H1 (cell line): ENCODE measurements at regions of chr4 and their contacts with region 1.

Region 1: DNA sequence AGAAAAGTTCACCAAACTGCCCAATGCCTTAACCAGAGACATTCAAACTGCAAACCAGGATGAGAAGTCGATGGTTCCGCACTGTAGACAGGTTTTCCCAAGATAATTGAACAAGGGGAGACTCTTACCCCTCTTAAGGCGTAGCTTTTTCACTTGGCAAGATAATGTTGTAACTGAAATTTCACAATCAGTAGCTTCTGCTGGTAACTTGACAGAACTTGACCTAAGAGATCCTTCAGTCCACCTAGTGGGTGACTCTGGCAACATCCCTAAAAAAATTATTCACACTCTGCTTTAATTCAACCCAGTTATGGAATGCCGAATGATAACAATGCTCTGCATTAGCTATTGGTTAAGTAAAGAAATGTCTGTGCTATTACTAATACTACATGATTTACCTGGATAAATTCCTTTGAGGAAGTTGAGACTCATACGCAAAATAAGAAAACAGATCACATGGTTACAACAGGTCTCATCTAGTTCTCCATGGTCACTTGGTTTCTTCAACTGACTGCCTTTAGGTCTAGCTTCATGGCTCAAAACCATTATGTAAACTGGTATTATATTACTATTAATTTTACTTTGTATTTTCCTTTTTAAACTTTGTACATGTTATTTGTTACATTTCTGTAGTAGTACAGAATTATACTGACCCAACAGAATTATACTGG is 9.1 kb downstream of the ELF2 start:
- DNase-seq: no peak
- H3K4me3 ChIP-seq: no peak overlapping the region
- H3K27ac ChIP-seq: no peak overlapping the region; the same call in 1 of the 2 replicates
- H3K4me1 ChIP-seq: peaks cover 1 to 11% (median 7%) of the 10 kb centered on the region in 4 experiments; a peak in 4 of 7 replicates
- H3K27me3 ChIP-seq: no peaks in the 10 kb centered on the region
- CTCF ChIP-seq: peak in 2 of 3 experiments; percentile 50 to 58; a peak in 2 of 4 replicates
- EP300 ChIP-seq: no peak
- POLR2A ChIP-seq: no peak
- RAD21 ChIP-seq: peak; percentile 71 to 78

Region 2: GRCh38 chr4:139099366-139099982 is 68.4 kb before region 1 on chr4:
- CTCF ChIA-PET with region 1: interaction called, 68 read pairs
- POLR2A ChIA-PET with region 1: interaction called, 3 read pairs
- DNase-seq: peak in 1 of 2 experiments; percentile 73
- H3K4me3 ChIP-seq: no peak overlapping the region
- H3K27ac ChIP-seq: no peak overlapping the region
- H3K4me1 ChIP-seq: no peaks in the 10 kb centered on the region
- H3K27me3 ChIP-seq: no peaks in the 10 kb centered on the region
- CTCF ChIP-seq: peak; percentile 25 to 91 (median 84)
- EP300 ChIP-seq: no peak
- POLR2A ChIP-seq: no peak
- RAD21 ChIP-seq: peak; percentile 97 to 99

Region 3: DNA sequence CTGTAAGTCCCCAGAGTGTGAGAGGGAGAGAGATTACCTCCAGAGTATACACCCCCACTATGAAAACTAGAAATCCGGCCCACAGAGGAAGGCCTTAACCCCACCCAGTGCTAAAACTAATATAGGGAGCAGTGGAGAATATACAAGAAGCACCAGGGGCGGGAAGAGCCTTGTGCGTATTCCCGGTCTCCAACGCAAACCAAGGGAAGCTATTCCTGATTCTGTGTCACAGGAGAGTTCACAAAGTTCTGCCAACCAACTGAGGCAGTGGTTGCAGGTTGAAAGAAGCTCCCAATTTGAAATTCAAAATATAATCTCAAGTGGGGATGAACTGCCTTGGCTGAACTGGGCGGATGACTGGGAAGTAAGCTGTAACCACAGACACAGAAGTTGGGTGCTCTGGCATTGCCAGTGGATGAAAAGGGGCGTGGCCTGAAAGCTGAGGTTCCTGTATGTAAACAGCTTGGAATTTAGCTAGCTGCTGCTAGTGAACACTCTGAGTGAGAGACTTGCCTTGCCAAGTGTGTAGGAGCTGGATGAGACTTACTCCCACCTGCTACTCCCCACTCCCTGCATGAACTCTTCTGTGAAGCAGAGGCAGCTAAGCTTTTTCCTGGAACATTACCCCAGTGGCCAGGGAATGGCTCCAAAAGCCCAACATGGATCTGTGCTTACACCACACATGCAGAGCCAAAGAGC is 23.6 kb before region 1 on chr4:
- CTCF ChIA-PET with region 1: interaction called, 12 read pairs
- POLR2A ChIA-PET with region 1: interaction called, 3 read pairs
- DNase-seq: no peak
- H3K4me3 ChIP-seq: no peak overlapping the region; a peak in 1 of 8 replicates
- H3K27ac ChIP-seq: peak overlapping the region; percentile 60
- H3K4me1 ChIP-seq: peaks cover 12 to 21% (median 21%) of the 10 kb centered on the region in 4 experiments
- H3K27me3 ChIP-seq: no peaks in the 10 kb centered on the region
- CTCF ChIP-seq: no peak
- EP300 ChIP-seq: no peak
- POLR2A ChIP-seq: no peak
- RAD21 ChIP-seq: no peak

Region 4: DNA sequence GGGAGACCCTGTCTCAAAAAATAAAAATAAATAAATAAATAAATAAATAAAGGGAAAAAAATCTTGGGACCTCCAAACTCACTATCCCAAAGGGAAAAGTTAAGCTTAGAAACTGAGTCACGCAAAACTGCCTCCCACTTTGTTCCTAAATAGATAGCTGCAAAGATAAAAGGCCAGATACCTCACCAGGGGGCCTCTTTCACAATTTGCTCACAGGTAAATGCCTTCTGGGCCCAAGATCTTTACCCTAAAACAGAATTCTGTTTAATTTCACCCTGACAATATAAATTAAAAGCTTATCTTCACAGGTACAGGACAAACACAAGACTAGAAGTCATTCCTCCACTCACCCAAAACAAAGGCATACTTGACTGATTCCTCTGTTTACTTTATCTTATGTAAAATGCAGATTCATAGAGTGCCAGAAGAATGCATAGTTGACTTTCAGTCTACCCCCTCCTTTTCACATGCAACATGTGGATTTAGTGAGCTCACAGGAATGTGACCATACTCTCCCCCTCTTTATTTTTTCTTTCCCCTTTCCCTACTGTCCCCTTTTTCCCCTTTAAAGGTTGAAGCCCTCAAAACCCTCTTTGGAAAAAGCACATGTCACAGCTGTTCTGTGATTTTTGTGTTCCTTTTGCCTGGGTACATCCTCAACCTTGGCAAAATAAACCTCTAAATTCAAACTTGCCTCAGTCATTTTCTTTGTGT is 14.3 kb before region 1 on chr4:
- CTCF ChIA-PET with region 1: interaction called, 15 read pairs
- POLR2A ChIA-PET with region 1: interaction called, 22 read pairs
- DNase-seq: no peak
- H3K4me3 ChIP-seq: peak overlapping the region in 1 of 4 experiments; percentile 21; a peak in 1 of 8 replicates
- H3K27ac ChIP-seq: peak overlapping the region; percentile 78; the same call in 1 of the 2 replicates
- H3K4me1 ChIP-seq: peaks cover 8 to 19% (median 19%) of the 10 kb centered on the region in 4 experiments
- H3K27me3 ChIP-seq: no peaks in the 10 kb centered on the region
- CTCF ChIP-seq: no peak
- EP300 ChIP-seq: peak in 1 of 2 experiments; percentile 73; a peak in 1 of 3 replicates
- POLR2A ChIP-seq: peak in 1 of 2 experiments; percentile 22; a peak in 1 of 3 replicates
- RAD21 ChIP-seq: no peak